ENCODE measurements at regions of chr19 and their contacts with region 1.

Region 1: GRCh38 chr19:6862673-6863078 is 24.7 kb upstream of the ADGRE1 start:
- DNase-seq: peak; percentile 54
- ATAC-seq: peak; percentile 91
- H3K4me3 ChIP-seq: peak overlapping the region; percentile 35 to 43
- H3K27ac ChIP-seq: no peak overlapping the region
- H3K4me1 ChIP-seq: no peaks in the 10 kb centered on the region
- H3K27me3 ChIP-seq: no peaks in the 10 kb centered on the region
- CTCF ChIP-seq: peak; percentile 83

Region 2: DNA sequence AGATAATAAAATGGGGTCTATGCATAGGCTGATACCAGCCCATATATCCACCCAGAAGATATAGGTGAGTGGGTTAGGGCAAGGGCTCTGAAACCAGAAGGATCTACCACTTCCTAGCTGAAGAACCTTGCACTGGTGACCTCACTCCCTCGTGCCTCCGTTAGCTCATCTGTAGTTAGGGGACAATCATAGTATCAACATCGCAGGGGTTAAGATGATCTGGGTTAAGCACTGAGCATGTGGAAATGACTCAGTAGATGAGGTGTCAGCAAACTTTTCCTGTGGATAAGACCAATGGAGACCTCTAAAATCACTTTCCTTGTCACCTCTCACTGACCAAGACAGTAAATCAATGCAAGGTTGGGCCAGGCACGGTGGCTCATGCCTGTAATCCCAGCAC is 223.2 kb before region 1 on chr19:
- CTCF ChIA-PET with region 1: interaction called, 15 read pairs
- POLR2A ChIA-PET with region 1: no interaction called
- in situ Hi-C with region 1: no loop called
- intact Hi-C with region 1: no loop called
- DNase-seq: peak; percentile 88
- ATAC-seq: no peak; the same call in 1 of the 2 replicates
- H3K4me3 ChIP-seq: no peak overlapping the region
- H3K27ac ChIP-seq: no peak overlapping the region
- H3K4me1 ChIP-seq: no peaks in the 10 kb centered on the region
- H3K27me3 ChIP-seq: no peaks in the 10 kb centered on the region
- CTCF ChIP-seq: no peak

Region 3: GRCh38 chr19:6737284-6738046 is 125.2 kb before region 1 on chr19 and contains the start of gene GPR108:
- CTCF ChIA-PET with region 1: interaction called, 11 read pairs
- POLR2A ChIA-PET with region 1: no interaction called
- in situ Hi-C with region 1: no loop called
- intact Hi-C with region 1: loop called (anchors 2 kb)
- DNase-seq: peak; percentile 99
- ATAC-seq: peak; percentile 81
- H3K4me3 ChIP-seq: peak within 1 kb of the TSS; percentile 88 to 92
- H3K27ac ChIP-seq: peak within 1 kb of the TSS; percentile 92
- H3K4me1 ChIP-seq: peaks cover 15% of the 10 kb centered on the region
- H3K27me3 ChIP-seq: no peaks in the 10 kb centered on the region
- CTCF ChIP-seq: no peak
- total RNA-seq, gene GPR108: 43.0 TPM

Region 4: GRCh38 chr19:6753178-6754031 is 109.3 kb before region 1 on chr19:
- CTCF ChIA-PET with region 1: interaction called, 5 read pairs
- POLR2A ChIA-PET with region 1: no interaction called
- in situ Hi-C with region 1: no loop called
- intact Hi-C with region 1: loop called (anchors 5 kb)
- DNase-seq: peak; percentile 69
- ATAC-seq: peak; percentile 91
- H3K4me3 ChIP-seq: peak overlapping the region; percentile 42 to 58
- H3K27ac ChIP-seq: peak overlapping the region; percentile 73
- H3K4me1 ChIP-seq: peaks cover 2% of the 10 kb centered on the region; the same call in 1 of the 2 replicates
- H3K27me3 ChIP-seq: no peaks in the 10 kb centered on the region
- CTCF ChIP-seq: peak; percentile 78; the same call in 1 of the 2 replicates

Region 5: DNA sequence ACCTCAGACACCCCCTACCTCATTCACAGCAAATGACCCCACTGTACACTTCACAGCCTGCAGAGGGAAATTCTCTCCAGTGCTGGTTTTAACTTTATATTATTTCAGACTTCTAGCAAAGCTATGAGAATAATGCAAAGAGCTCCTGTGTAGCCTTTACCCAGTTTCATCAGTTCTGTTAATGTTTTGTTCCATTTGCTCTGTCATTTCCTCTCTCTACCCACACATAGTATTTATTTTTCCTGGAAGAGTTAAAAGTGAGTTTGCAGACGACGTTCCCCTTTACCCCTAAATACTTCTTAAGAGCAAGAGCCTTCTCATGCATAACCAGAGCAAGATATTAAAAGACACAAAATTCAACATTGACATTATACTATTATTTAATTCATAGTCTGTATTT is 25.2 kb before region 1 on chr19:
- CTCF ChIA-PET with region 1: no interaction called
- POLR2A ChIA-PET with region 1: no interaction called
- in situ Hi-C with region 1: no loop called
- intact Hi-C with region 1: no loop called
- DNase-seq: no peak
- ATAC-seq: no peak
- H3K4me3 ChIP-seq: no peak overlapping the region
- H3K27ac ChIP-seq: no peak overlapping the region
- H3K4me1 ChIP-seq: no peaks in the 10 kb centered on the region
- H3K27me3 ChIP-seq: no peaks in the 10 kb centered on the region
- CTCF ChIP-seq: no peak

Region 6: DNA sequence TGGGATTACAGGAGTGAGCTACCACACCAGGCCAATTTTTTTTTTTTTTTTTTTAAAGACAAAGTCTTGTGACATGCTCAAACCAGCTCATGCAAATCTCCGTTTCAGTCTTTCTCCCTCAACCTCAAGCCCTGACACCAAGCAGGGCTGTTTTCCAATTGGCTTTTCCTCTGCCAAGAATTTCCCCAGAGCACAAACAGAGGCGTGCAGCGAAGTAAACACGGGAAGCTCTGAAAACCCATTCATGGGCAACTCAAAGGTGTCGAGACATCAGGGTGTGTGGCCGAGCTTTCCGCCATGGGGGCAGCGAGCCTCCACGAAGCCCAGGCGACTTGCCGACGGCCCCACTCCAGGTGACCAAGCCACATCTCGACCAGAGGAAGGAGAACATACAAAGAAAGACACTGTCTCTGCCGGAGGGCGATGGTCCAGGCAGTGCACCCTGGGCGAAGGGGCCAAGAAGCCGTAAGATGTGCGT is 361.6 kb after region 1 on chr19:
- CTCF ChIA-PET with region 1: no interaction called
- POLR2A ChIA-PET with region 1: no interaction called
- in situ Hi-C with region 1: no loop called
- intact Hi-C with region 1: no loop called
- DNase-seq: no peak
- ATAC-seq: no peak
- H3K4me3 ChIP-seq: no peak overlapping the region
- H3K27ac ChIP-seq: no peak overlapping the region
- H3K4me1 ChIP-seq: no peaks in the 10 kb centered on the region
- H3K27me3 ChIP-seq: no peaks in the 10 kb centered on the region
- CTCF ChIP-seq: no peak